ENCODE measurements at regions of chr1 and their contacts with region 1.

Region 1: DNA sequence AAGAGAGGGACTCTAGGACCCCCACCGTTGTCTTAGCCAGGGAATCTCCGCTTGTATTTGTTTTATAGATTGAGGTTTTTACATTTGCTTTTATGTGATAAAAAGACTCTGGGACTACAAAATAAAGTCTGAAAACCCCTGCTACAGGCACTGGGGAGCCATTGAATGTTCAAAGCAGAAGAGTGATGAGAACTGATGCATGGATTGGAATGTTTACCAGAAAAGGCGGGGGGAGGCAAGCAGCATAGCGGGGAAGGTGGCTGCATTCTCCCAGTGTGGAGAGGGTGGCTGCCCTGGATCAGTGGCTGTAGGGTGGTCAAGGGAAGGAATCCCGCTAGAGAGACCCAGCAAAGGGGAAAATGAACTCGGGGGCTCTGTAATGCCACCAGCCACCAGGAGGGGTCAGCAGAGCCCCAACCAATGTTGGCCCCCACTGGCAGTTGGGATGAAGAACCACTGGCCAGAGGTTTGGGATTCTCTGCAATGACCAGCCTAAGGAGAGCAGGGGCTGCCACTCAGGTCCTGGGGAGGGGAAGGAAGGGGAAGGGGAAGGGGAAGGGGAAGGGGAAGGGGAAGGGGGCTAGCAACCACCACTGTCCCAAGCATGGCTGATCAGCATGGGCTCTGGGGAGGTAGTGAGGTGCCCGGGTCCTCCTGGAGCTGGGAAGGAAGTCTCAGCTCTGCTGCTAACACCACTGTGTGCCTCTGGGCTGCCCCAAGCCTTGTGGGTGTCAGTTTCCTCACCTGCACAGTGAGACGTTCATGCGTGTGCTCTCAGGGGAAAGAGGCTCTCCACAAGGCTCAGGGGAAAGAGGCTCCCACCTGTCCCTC is 19.2 kb upstream of the PEF1 start:
- DNase-seq: peak in 4 of 6 donors; percentile 24 to 87 (median 64)
- ATAC-seq: peak; percentile 50 to 85 (median 76)
- H3K4me3 ChIP-seq: no peak overlapping the region
- H3K27ac ChIP-seq: no peak overlapping the region
- H3K4me1 ChIP-seq: no peaks in the 10 kb centered on the region
- H3K27me3 ChIP-seq: no peaks in the 10 kb centered on the region
- CTCF ChIP-seq: peak; percentile 66 to 88 (median 80)

Region 2: GRCh38 chr1:31617917-31618660 is 45.7 kb before region 1 on chr1:
- intact Hi-C with region 1: no loop called
- DNase-seq: peak in 4 of 6 donors; percentile 40 to 80 (median 62)
- ATAC-seq: peak; percentile 74 to 88 (median 82)
- H3K4me3 ChIP-seq: peak overlapping the region; percentile 13 to 64 (median 26)
- H3K27ac ChIP-seq: no peak overlapping the region
- H3K4me1 ChIP-seq: peaks cover 0 to 3% (median 0%) of the 10 kb centered on the region in 3 donors
- H3K27me3 ChIP-seq: no peaks in the 10 kb centered on the region
- CTCF ChIP-seq: peak; percentile 63 to 80 (median 75)

Region 3: GRCh38 chr1:31748365-31748764 is 84.5 kb after region 1 on chr1:
- intact Hi-C with region 1: loop called in 1 of 3 experiments (anchors 2 kb)
- DNase-seq: no peak
- ATAC-seq: no peak
- H3K4me3 ChIP-seq: no peak overlapping the region
- H3K27ac ChIP-seq: no peak overlapping the region
- H3K4me1 ChIP-seq: peaks cover 0 to under 1% (median 0%) of the 10 kb centered on the region in 3 donors
- H3K27me3 ChIP-seq: no peaks in the 10 kb centered on the region
- CTCF ChIP-seq: no peak

Region 4: DNA sequence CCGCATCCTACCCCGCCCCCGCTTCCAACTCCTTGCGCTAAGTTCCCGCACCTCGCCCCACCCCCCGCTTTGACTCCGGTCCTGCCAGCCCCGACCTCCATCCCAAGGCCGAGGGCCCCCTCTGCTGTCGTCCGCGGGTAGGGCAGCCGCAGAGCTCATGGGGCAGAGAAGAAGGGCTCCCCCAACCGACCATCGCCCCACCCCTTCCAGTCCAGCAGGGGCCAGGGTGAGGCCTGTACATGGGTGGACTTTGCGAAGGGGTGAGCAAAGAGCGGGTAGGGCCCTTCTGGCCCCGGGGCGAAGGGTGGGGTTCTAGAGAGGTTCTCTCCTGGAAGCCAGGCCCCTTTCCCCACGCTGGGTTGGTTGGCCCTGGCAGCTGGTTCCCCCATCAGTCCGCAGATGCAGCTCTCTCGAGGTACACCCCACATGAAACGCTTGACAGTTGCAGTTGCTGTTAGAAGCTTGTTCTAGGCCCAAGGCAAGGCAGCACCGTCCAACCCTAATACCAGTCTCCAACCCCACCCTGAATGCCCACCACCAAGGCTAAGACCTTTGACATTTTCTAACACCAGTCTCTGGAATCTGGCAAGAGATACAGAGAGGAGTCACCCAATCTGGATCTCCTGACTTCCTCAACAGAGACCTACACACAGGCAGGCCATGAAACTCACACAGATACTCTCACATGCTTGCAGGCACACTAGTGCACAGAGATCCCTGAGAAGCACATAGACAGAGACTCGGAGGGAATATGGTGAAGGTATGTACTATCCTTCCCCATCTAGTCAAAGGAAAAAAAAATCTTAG is 125.6 kb after region 1 on chr1:
- intact Hi-C with region 1: loop called (anchors 5 kb)
- DNase-seq: peak; percentile 89 to 99 (median 95)
- ATAC-seq: peak; percentile 88 to 96 (median 94)
- H3K4me3 ChIP-seq: peak overlapping the region; percentile 32 to 60 (median 42)
- H3K27ac ChIP-seq: no peak overlapping the region
- H3K4me1 ChIP-seq: no peaks in the 10 kb centered on the region
- H3K27me3 ChIP-seq: no peaks in the 10 kb centered on the region
- CTCF ChIP-seq: peak; percentile 51 to 73 (median 70)

Region 5: DNA sequence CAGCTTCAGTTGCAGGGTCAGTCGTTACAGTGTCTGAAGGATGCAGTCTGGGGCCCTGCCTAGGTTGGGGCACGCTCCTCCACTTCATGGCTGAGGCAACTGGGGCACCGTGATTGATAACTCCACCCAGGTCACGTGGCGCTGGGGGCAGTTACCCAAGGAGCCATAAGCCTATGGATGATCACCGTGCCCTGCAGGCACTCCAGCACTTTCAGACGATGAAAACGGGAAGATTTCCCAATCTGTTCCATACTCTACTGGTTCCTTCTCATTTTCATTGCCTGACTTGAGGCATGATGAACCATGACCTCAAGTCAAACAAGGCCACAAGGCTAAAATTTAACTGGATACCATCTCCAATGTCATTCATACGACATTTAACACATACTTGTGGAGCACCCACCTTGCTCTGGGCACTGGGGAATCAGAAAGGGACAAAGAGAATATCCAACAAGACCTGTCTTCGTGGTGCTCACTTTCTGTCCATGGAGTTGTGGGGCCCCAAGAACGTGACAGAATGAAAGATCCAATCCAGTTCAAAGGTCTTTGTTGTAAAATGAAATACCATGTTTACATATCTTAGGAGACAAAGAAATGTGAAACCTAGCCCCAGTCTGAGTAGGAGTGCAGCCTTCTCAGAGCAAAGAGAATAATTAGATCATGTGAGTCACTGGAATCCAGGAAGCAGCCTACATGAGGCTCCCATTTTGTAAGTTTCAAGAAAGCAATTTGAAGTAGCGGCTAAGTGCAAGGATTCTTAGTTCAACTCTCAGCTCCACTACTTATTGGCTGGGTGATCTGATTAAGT is 191.4 kb after region 1 on chr1:
- intact Hi-C with region 1: no loop called
- DNase-seq: no peak
- ATAC-seq: peak in 1 of 4 donors; percentile 36
- H3K4me3 ChIP-seq: no peak overlapping the region
- H3K27ac ChIP-seq: no peak overlapping the region
- H3K4me1 ChIP-seq: no peaks in the 10 kb centered on the region
- H3K27me3 ChIP-seq: no peaks in the 10 kb centered on the region
- CTCF ChIP-seq: no peak